ENCODE measurements at regions of chr2 and their contacts with region 1.

Region 1: GRCh38 chr2:36902385-36903120 is 63.8 kb downstream of the STRN start:
- DNase-seq: no peak
- ATAC-seq: no peak
- H3K4me3 ChIP-seq: no peak overlapping the region
- H3K27ac ChIP-seq: no peak overlapping the region
- H3K4me1 ChIP-seq: no peaks in the 10 kb centered on the region
- H3K27me3 ChIP-seq: no peaks in the 10 kb centered on the region
- CTCF ChIP-seq: no peak

Region 2: DNA sequence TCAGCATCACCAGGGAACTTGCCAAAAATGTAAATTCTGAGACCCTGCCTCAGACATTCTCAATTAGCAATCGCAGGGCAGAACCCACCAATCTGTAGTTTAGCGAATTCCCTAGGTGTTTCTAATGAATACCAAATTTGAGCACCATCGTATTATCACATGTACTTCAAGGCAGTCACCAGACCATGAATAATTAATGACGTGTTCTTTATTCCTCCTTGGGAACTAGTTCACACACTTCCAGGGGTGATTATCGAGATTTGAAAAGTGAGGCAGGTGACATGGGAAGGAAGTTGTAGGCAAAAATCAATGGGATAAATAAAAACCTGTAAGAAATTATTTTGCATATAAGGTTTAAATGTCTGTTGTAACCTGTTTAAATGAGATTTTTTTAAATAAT is 649.5 kb before region 1 on chr2:
- CTCF ChIA-PET with region 1: no interaction called
- POLR2A ChIA-PET with region 1: no interaction called
- in situ Hi-C with region 1: no loop called
- intact Hi-C with region 1: no loop called
- DNase-seq: no peak
- ATAC-seq: no peak
- H3K4me3 ChIP-seq: no peak overlapping the region
- H3K27ac ChIP-seq: no peak overlapping the region
- H3K4me1 ChIP-seq: no peaks in the 10 kb centered on the region
- H3K27me3 ChIP-seq: no peaks in the 10 kb centered on the region
- CTCF ChIP-seq: no peak

Region 3: DNA sequence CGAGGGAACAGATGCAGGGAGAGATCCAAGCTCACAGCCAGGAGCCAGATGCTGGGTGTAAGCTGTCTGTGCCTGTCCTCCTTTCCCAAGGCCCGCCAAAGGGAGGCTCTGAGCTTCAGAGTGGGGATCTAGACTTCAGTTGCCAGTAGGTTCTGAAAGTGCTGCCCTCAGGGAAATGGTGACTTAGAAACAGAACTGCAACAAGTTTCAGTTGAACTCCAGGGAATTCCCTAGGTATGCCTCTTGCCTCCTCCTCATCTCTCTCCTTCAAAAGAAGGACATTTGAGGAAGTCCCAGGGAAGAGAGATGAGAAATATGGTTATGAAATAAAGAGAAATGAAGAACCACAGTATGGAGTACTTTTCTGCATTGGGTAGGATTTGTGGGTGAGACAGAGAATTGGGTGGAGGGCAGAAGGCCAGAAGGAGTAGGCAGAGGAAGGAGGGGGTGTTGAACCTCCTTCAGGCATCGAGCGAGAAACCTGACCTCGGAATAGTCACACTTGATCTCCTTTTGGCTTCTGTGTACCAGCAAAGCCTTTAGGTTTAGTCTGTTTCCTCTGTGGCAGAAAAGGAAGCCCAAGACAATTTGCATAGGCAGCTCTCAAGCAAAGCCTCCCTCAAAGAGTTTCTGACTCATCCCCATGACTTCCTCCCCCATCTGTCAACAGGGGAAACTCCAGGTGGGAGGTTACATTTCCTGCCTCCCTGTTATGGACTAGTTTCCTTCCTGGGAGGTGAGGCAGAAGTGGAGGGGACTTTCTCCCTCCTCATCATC is 487.6 kb after region 1 on chr2:
- CTCF ChIA-PET with region 1: interaction called, 11 read pairs
- POLR2A ChIA-PET with region 1: no interaction called
- in situ Hi-C with region 1: no loop called
- intact Hi-C with region 1: no loop called
- DNase-seq: no peak
- ATAC-seq: peak; percentile 84
- H3K4me3 ChIP-seq: no peak overlapping the region
- H3K27ac ChIP-seq: no peak overlapping the region
- H3K4me1 ChIP-seq: no peaks in the 10 kb centered on the region
- H3K27me3 ChIP-seq: no peaks in the 10 kb centered on the region
- CTCF ChIP-seq: no peak

Measured in Panc1 (cell line).